ENCODE measurements at regions of chr19 and their contacts with region 1.

Region 1: GRCh38 chr19:1490311-1491113 is at the start of gene PCSK4:
- DNase-seq: peak; percentile 95
- ATAC-seq: peak; percentile 83
- H3K4me3 ChIP-seq: peak within 1 kb of the TSS; percentile 72 to 85 (median 77)
- H3K27ac ChIP-seq: peak within 1 kb of the TSS; percentile 68
- H3K4me1 ChIP-seq: peaks cover 46% of the 10 kb centered on the region
- H3K27me3 ChIP-seq: no peaks in the 10 kb centered on the region
- CTCF ChIP-seq: no peak
- EP300 ChIP-seq: no peak
- POLR2A ChIP-seq: no peak
- RAD21 ChIP-seq: peak; percentile 36; the same call in 1 of the 2 replicates
- total RNA-seq, gene PCSK4: 0.52 and 2.0 TPM in 2 replicates

Region 2: GRCh38 chr19:1260636-1261537 is 229.6 kb before region 1 on chr19:
- CTCF ChIA-PET with region 1: no interaction called
- POLR2A ChIA-PET with region 1: no interaction called
- in situ Hi-C with region 1: no loop called
- intact Hi-C with region 1: no loop called
- DNase-seq: peak; percentile 88
- ATAC-seq: peak; percentile 59
- H3K4me3 ChIP-seq: peak overlapping the region; percentile 71 to 81 (median 80)
- H3K27ac ChIP-seq: peak overlapping the region; percentile 85
- H3K4me1 ChIP-seq: peaks cover 82% of the 10 kb centered on the region
- H3K27me3 ChIP-seq: no peaks in the 10 kb centered on the region
- CTCF ChIP-seq: no peak
- EP300 ChIP-seq: 0 out of 4 replicates have a peak, but pooled peaks of 1 of the 2 experiments have one; percentile 24
- POLR2A ChIP-seq: no peak
- RAD21 ChIP-seq: no peak

Region 3: DNA sequence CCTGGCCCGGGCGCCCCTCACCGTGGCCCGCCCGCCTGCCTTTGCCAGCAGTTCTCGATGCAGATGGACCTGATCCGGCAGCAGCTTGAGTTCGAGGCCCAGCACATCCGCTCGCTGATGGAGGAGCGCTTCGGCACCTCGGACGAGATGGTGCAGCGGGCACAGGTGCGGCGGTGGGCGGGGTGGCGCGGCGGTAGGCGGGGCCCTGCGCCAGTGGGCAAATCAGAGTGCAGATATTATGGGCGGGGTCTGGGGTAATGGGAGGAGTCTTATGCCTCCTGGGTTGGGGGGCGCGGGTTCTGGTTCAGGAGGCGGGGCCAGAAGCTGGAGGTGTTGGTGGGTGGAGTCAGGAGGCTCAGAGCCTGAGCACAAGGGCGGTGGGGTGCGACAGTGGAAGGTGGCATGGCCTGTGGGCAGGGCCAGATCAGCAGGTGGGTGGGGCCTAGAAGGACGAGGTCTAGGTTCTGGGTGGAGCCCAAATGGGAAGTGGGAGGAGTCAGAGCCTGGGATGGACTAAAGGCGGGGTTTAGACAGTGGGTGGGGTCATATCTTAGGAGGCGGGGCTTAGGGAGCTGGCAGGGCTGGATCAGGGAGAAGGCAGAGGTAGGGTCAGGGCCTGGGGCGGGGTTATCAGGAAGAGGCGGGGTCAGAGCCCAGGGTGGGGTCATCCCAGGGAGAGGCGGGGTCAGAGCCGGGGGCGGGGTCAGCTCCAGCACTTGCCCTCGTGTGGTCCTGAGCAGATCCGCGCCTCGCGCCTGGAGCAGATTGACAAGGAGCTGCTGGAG is 35.0 kb before region 1 on chr19:
- CTCF ChIA-PET with region 1: no interaction called
- POLR2A ChIA-PET with region 1: interaction called, 34 read pairs
- in situ Hi-C with region 1: no loop called
- intact Hi-C with region 1: no loop called
- DNase-seq: peak; percentile 76
- ATAC-seq: peak; percentile 52
- H3K4me3 ChIP-seq: peak overlapping the region in 2 of 3 experiments; percentile 25 to 51; a peak in 2 of 6 replicates
- H3K27ac ChIP-seq: no peak overlapping the region
- H3K4me1 ChIP-seq: peaks cover 48% of the 10 kb centered on the region
- H3K27me3 ChIP-seq: peaks cover 10 to 58% of the 10 kb centered on the region in 2 experiments
- CTCF ChIP-seq: no peak
- EP300 ChIP-seq: no peak
- POLR2A ChIP-seq: no peak
- RAD21 ChIP-seq: no peak

Region 4: GRCh38 chr19:1470203-1471009 is 20.1 kb before region 1 on chr19:
- CTCF ChIA-PET with region 1: no interaction called
- POLR2A ChIA-PET with region 1: interaction called, 19 read pairs
- in situ Hi-C with region 1: no loop called
- intact Hi-C with region 1: no loop called
- DNase-seq: no peak
- ATAC-seq: peak; percentile 40
- H3K4me3 ChIP-seq: peak overlapping the region; percentile 41 to 69 (median 54)
- H3K27ac ChIP-seq: no peak overlapping the region
- H3K4me1 ChIP-seq: peaks cover 25% of the 10 kb centered on the region
- H3K27me3 ChIP-seq: no peaks in the 10 kb centered on the region
- CTCF ChIP-seq: no peak
- EP300 ChIP-seq: no peak
- POLR2A ChIP-seq: no peak
- RAD21 ChIP-seq: no peak; the same call in 1 of the 2 replicates

Region 5: GRCh38 chr19:1475751-1476437 is 14.6 kb before region 1 on chr19:
- CTCF ChIA-PET with region 1: no interaction called
- POLR2A ChIA-PET with region 1: interaction called, 29 read pairs
- in situ Hi-C with region 1: no loop called
- intact Hi-C with region 1: no loop called
- DNase-seq: no peak
- ATAC-seq: no peak
- H3K4me3 ChIP-seq: no peak overlapping the region
- H3K27ac ChIP-seq: no peak overlapping the region
- H3K4me1 ChIP-seq: peaks cover 40% of the 10 kb centered on the region
- H3K27me3 ChIP-seq: no peaks in the 10 kb centered on the region
- CTCF ChIP-seq: no peak
- EP300 ChIP-seq: no peak
- POLR2A ChIP-seq: no peak
- RAD21 ChIP-seq: no peak